ENCODE measurements at regions of chrX and their contacts with region 1.

Region 1: GRCh38 chrX:22748093-22748999 is 251.4 kb upstream of the DDX53 start:
- DNase-seq: peak; percentile 32
- ATAC-seq: peak; percentile 76
- H3K4me3 ChIP-seq: no peak overlapping the region
- H3K27ac ChIP-seq: no peak overlapping the region
- H3K4me1 ChIP-seq: no peaks in the 10 kb centered on the region
- H3K27me3 ChIP-seq: no peaks in the 10 kb centered on the region
- CTCF ChIP-seq: peak; percentile 79

Region 2: GRCh38 chrX:22278374-22278773 is 470.0 kb before region 1 on chrX:
- CTCF ChIA-PET with region 1: no interaction called
- POLR2A ChIA-PET with region 1: no interaction called
- in situ Hi-C with region 1: no loop called
- intact Hi-C with region 1: loop called (anchors 10 kb)
- DNase-seq: no peak
- ATAC-seq: no peak
- H3K4me3 ChIP-seq: no peak overlapping the region
- H3K27ac ChIP-seq: no peak overlapping the region
- H3K4me1 ChIP-seq: no peaks in the 10 kb centered on the region
- H3K27me3 ChIP-seq: no peaks in the 10 kb centered on the region
- CTCF ChIP-seq: peak; percentile 24

Region 3: GRCh38 chrX:22674932-22675331 is 73.4 kb before region 1 on chrX:
- CTCF ChIA-PET with region 1: no interaction called
- POLR2A ChIA-PET with region 1: no interaction called
- in situ Hi-C with region 1: no loop called
- intact Hi-C with region 1: no loop called
- DNase-seq: no peak
- ATAC-seq: no peak
- H3K4me3 ChIP-seq: no peak overlapping the region
- H3K27ac ChIP-seq: no peak overlapping the region
- H3K4me1 ChIP-seq: no peaks in the 10 kb centered on the region
- H3K27me3 ChIP-seq: no peaks in the 10 kb centered on the region
- CTCF ChIP-seq: no peak

Measured in Panc1 (cell line).